Dendritic cell treated with granulocyte-macrophage colony-stimulating factor and Interleukin-4, amounts not matched to agents 40 ng/mL and 50 ng/mL, for 4 days (primary cell): ENCODE measurements at regions of chrX and their contacts with region 1.

Region 1: DNA sequence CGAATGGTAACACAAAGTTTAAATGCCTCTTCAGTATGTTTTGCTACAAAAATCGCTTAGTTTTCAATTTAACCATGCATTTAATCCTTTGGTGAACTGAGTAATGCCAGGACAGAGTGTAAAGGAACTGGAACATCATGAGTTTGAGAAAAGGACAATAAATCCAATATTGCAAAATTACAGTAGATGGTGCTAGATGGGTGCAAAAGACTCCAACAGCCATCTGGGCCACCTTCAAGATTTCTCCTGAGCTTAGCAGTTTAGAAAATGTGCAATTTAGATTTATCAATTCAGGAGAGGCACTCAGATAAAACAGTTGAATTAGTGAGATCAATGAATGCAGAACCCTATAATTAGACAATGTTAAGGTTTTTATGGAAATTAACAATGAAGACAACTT is 33.2 kb upstream of the MID1IP1 start:
- H3K4me3 Mint-ChIP-seq: no peak overlapping the region
- H3K27ac Mint-ChIP-seq: no peak overlapping the region
- H3K4me1 Mint-ChIP-seq: no peaks in the 10 kb centered on the region
- H3K27me3 Mint-ChIP-seq: no peaks in the 10 kb centered on the region

Region 2: DNA sequence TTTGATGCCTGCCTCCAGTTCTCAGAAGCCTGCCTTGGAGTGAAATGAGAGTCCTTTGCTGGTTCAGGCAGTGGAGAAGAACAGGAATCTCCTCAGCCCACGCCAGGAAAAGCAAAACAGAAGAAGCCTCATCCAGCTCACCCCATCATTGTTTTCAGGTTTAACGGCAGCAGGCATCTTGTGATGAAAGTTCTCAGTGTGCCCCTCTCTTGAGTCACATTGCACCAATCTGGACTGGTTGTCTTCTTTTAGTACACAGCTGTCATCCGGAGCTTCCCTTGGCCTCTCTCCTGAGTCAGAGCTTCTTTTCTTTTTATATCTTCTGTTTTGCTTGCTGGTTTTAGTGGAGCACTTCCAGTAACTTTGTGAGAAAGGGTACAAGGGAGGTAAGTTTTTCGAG is 155.8 kb before region 1 on chrX:
- intact Hi-C with region 1: no loop called
- H3K4me3 Mint-ChIP-seq: no peak overlapping the region
- H3K27ac Mint-ChIP-seq: no peak overlapping the region
- H3K4me1 Mint-ChIP-seq: no peaks in the 10 kb centered on the region
- H3K27me3 Mint-ChIP-seq: no peaks in the 10 kb centered on the region

Region 3: DNA sequence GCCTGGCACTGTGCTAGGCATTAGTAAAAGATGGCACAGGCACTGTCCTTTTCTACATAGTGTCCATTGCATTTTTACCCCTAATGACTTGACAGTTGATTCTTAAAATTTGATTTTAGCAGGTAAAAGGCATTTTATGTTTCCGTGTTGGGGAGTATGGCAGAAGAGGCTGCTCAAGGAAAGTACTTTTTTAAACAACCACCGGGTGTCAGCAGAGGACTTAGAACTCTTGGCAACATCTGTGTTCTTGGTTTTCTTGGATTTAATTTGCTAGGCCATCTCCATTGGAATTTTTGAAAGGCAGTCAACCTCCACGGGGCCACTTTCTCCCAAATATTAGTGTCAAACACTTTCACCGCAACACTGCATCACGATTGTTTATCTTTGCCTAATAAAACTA is 103.8 kb before region 1 on chrX:
- intact Hi-C with region 1: loop called (anchors 10 kb)
- H3K4me3 Mint-ChIP-seq: no peak overlapping the region
- H3K27ac Mint-ChIP-seq: no peak overlapping the region
- H3K4me1 Mint-ChIP-seq: peaks cover 6% of the 10 kb centered on the region
- H3K27me3 Mint-ChIP-seq: no peaks in the 10 kb centered on the region

Region 4: GRCh38 chrX:38985375-38985774 is 217.3 kb after region 1 on chrX:
- intact Hi-C with region 1: loop called (anchors 2 kb)
- H3K4me3 Mint-ChIP-seq: no peak overlapping the region
- H3K27ac Mint-ChIP-seq: no peak overlapping the region
- H3K4me1 Mint-ChIP-seq: peaks cover 24% of the 10 kb centered on the region
- H3K27me3 Mint-ChIP-seq: peaks cover 2% of the 10 kb centered on the region